ENCODE measurements at regions of chr1 and their contacts with region 1.

Region 1: GRCh38 chr1:99979091-99979490 is 9.3 kb downstream of the SLC35A3 start:
- DNase-seq: no peak
- ATAC-seq: no peak
- H3K4me3 ChIP-seq: no peak overlapping the region
- H3K4me3 Mint-ChIP-seq: no peak overlapping the region
- H3K27ac ChIP-seq: no peak overlapping the region
- H3K27ac Mint-ChIP-seq: no peak overlapping the region
- H3K4me1 ChIP-seq: no peaks in the 10 kb centered on the region
- H3K4me1 Mint-ChIP-seq: peaks cover 5 to 23% (median 23%) of the 10 kb centered on the region in 3 donors
- H3K27me3 ChIP-seq: no peaks in the 10 kb centered on the region
- H3K27me3 Mint-ChIP-seq: no peaks in the 10 kb centered on the region

Region 2: GRCh38 chr1:99758073-99758511 is 221.0 kb before region 1 on chr1:
- CTCF ChIA-PET with region 1: no interaction called
- POLR2A ChIA-PET with region 1: no interaction called
- DNase-seq: no peak
- ATAC-seq: no peak
- H3K4me3 ChIP-seq: no peak overlapping the region
- H3K4me3 Mint-ChIP-seq: no peak overlapping the region
- H3K27ac ChIP-seq: no peak overlapping the region
- H3K27ac Mint-ChIP-seq: no peak overlapping the region
- H3K4me1 ChIP-seq: peaks cover 0 to 3% of the 10 kb centered on the region in 2 experiments
- H3K4me1 Mint-ChIP-seq: peaks cover 0 to 8% (median 8%) of the 10 kb centered on the region in 3 donors
- H3K27me3 ChIP-seq: no peaks in the 10 kb centered on the region
- H3K27me3 Mint-ChIP-seq: peaks cover 0 to 1% of the 10 kb centered on the region in 2 donors

Region 3: GRCh38 chr1:100077531-100077930 is 98.4 kb after region 1 on chr1:
- CTCF ChIA-PET with region 1: no interaction called
- POLR2A ChIA-PET with region 1: no interaction called
- DNase-seq: no peak
- ATAC-seq: no peak
- H3K4me3 ChIP-seq: no peak overlapping the region
- H3K4me3 Mint-ChIP-seq: no peak overlapping the region
- H3K27ac ChIP-seq: no peak overlapping the region
- H3K27ac Mint-ChIP-seq: peak overlapping the region in 1 of 2 donors; percentile 25
- H3K4me1 ChIP-seq: no peaks in the 10 kb centered on the region
- H3K4me1 Mint-ChIP-seq: peaks cover 0 to 2% (median 0%) of the 10 kb centered on the region in 3 donors
- H3K27me3 ChIP-seq: no peaks in the 10 kb centered on the region
- H3K27me3 Mint-ChIP-seq: no peaks in the 10 kb centered on the region

Region 4: DNA sequence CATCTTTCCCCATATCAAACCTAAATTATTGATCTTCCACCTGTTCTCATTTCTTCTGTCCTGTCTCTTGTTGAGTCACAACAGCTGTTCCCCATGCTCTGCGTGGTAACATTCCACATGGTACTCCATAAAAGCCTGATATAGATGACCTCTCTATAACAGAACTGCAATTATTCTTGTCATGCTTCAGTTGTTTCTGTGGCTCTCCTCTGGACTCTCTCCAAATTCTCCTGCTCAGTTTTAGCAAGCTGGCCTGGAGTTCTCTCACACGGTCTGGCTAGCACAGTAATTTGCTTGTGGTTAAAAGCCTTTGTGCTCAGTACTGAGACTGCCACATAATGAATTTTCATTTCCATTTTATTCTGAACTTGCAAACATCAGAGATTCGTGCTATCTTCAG is 209.5 kb after region 1 on chr1:
- CTCF ChIA-PET with region 1: no interaction called
- POLR2A ChIA-PET with region 1: no interaction called
- DNase-seq: no peak
- ATAC-seq: no peak
- H3K4me3 ChIP-seq: no peak overlapping the region
- H3K4me3 Mint-ChIP-seq: no peak overlapping the region
- H3K27ac ChIP-seq: no peak overlapping the region
- H3K27ac Mint-ChIP-seq: no peak overlapping the region
- H3K4me1 ChIP-seq: no peaks in the 10 kb centered on the region
- H3K4me1 Mint-ChIP-seq: no peaks in the 10 kb centered on the region
- H3K27me3 ChIP-seq: no peaks in the 10 kb centered on the region
- H3K27me3 Mint-ChIP-seq: no peaks in the 10 kb centered on the region

Region 5: DNA sequence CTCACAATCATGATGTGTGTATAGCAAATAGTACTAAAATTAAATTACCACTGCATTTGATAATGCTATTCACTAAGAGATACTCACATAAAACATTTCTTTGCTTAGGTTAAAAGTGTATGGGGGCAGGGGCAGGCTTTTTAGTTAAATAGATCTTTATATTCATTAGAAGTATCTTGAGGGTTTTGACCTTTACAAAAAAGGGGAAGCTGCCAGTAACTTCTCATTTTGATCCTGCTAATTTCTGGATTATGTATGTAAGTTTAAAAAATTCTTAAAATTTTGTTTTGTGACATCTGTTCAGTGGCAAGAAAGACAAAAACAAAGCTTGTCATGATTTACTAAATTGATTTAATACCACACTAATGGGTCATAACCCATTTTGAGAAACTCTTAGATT is 1212.0 kb after region 1 on chr1:
- CTCF ChIA-PET with region 1: interaction called in 1 of 2 experiments, 10 read pairs
- POLR2A ChIA-PET with region 1: no interaction called
- DNase-seq: no peak
- ATAC-seq: no peak
- H3K4me3 ChIP-seq: no peak overlapping the region
- H3K4me3 Mint-ChIP-seq: no peak overlapping the region
- H3K27ac ChIP-seq: no peak overlapping the region
- H3K27ac Mint-ChIP-seq: no peak overlapping the region
- H3K4me1 ChIP-seq: peaks cover 0 to 2% of the 10 kb centered on the region in 2 experiments
- H3K4me1 Mint-ChIP-seq: peaks cover 10 to 14% (median 11%) of the 10 kb centered on the region in 3 donors
- H3K27me3 ChIP-seq: no peaks in the 10 kb centered on the region
- H3K27me3 Mint-ChIP-seq: no peaks in the 10 kb centered on the region